IMR-90 (cell line): ENCODE measurements at regions of chr2 and their contacts with region 1.

Region 1: DNA sequence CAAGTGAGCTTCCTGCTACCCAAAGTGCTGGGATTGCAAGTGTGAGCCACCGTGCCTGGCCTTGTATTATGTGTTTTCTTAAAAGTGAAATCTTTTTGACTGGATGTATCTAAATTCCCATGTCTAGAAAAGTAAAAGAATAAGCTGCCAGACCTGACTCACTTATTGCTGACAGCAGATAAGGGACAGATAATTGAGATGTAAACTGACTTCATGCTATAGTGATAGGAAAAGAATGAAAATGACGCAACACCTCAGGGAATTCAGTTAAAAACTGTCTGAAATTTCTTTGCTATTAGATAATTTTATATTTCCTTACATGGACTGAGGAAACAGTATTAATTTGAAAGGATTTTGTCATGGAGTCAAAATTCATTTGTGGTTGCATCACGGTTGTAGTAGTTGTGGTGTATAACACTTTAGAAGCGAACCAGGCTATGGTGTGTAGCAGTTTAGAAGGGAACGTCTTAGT is 19.4 kb downstream of the TTC27 start:
- DNase-seq: peak; percentile 93
- ATAC-seq: peak; percentile 88
- H3K4me3 ChIP-seq: no peak overlapping the region
- H3K27ac ChIP-seq: peak overlapping the region; percentile 83; the same call in 1 of the 2 replicates
- H3K4me1 ChIP-seq: peaks cover 5% of the 10 kb centered on the region
- H3K27me3 ChIP-seq: no peaks in the 10 kb centered on the region
- CTCF ChIP-seq: no peak
- POLR2A ChIP-seq: no peak
- RAD21 ChIP-seq: no peak

Region 2: GRCh38 chr2:32738939-32739338 is 91.7 kb after region 1 on chr2:
- CTCF ChIA-PET with region 1: no interaction called
- POLR2A ChIA-PET with region 1: no interaction called
- dilution Hi-C with region 1: no loop called
- in situ Hi-C with region 1: no loop called
- intact Hi-C with region 1: loop called (anchors 5 kb)
- DNase-seq: peak; percentile 51
- ATAC-seq: no peak
- H3K4me3 ChIP-seq: no peak overlapping the region
- H3K27ac ChIP-seq: no peak overlapping the region
- H3K4me1 ChIP-seq: peaks cover 2% of the 10 kb centered on the region; the same call in 1 of the 2 replicates
- H3K27me3 ChIP-seq: no peaks in the 10 kb centered on the region
- CTCF ChIP-seq: no peak
- POLR2A ChIP-seq: no peak
- RAD21 ChIP-seq: no peak

Region 3: DNA sequence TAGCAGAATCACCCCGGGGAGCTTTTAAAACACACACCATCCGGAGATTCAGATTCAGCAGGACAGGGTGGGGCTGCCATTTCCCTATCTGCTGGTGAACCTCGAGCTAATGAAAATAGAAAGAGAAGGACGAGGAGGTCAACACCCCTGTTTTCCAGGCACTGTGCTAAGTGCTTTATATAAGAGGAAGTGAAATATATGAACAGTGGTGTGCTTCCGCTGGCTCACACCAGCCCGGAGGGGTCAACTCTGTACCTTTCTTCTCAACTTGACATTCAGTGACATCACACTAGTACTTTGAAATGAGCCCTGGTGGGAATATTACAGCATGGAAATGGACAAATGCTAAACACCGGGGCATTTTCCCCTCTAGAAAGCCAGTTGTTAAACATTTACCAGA is 191.2 kb after region 1 on chr2:
- CTCF ChIA-PET with region 1: no interaction called
- POLR2A ChIA-PET with region 1: no interaction called
- dilution Hi-C with region 1: no loop called
- in situ Hi-C with region 1: no loop called
- intact Hi-C with region 1: no loop called
- DNase-seq: no peak
- ATAC-seq: no peak
- H3K4me3 ChIP-seq: no peak overlapping the region
- H3K27ac ChIP-seq: no peak overlapping the region
- H3K4me1 ChIP-seq: no peaks in the 10 kb centered on the region; the same call in 1 of the 2 replicates
- H3K27me3 ChIP-seq: no peaks in the 10 kb centered on the region
- CTCF ChIP-seq: no peak
- POLR2A ChIP-seq: no peak
- RAD21 ChIP-seq: no peak